Activated B cell treated with CpG ODN at 0.5 μM for 24 hours (primary cell): ENCODE measurements at regions of chr1 and their contacts with region 1.

Region 1: GRCh38 chr1:218345673-218346390 is 696 bp downstream of the TGFB2 start:
- DNase-seq: peak; percentile 50
- ATAC-seq: peak; percentile 76
- H3K4me3 Mint-ChIP-seq: no peak overlapping the region
- H3K27ac Mint-ChIP-seq: no peak overlapping the region
- H3K4me1 Mint-ChIP-seq: peaks cover 46% of the 10 kb centered on the region
- H3K27me3 Mint-ChIP-seq: no peaks in the 10 kb centered on the region
- CTCF ChIP-seq: no peak

Region 2: GRCh38 chr1:217630711-217631591 is 714.9 kb before region 1 on chr1 and contains the starts of genes GPATCH2 and SPATA17:
- CTCF ChIA-PET with region 1: no interaction called
- POLR2A ChIA-PET with region 1: no interaction called
- intact Hi-C with region 1: loop called (anchors 5 kb)
- DNase-seq: peak; percentile 59
- ATAC-seq: peak; percentile 89
- H3K4me3 Mint-ChIP-seq: peak within 1 kb of the TSS; percentile 97
- H3K27ac Mint-ChIP-seq: peak within 1 kb of the TSS; percentile 100
- H3K4me1 Mint-ChIP-seq: peaks cover 28% of the 10 kb centered on the region
- H3K27me3 Mint-ChIP-seq: peaks cover 15% of the 10 kb centered on the region
- CTCF ChIP-seq: no peak
- total RNA-seq, gene GPATCH2: 13.5 and 17.5 TPM in 2 replicates
- total RNA-seq, gene SPATA17: not detected in 2 replicates

Region 3: GRCh38 chr1:218315638-218316037 is 30.2 kb before region 1 on chr1:
- CTCF ChIA-PET with region 1: no interaction called
- POLR2A ChIA-PET with region 1: no interaction called
- intact Hi-C with region 1: loop called (anchors 1 kb)
- DNase-seq: no peak
- ATAC-seq: no peak
- H3K4me3 Mint-ChIP-seq: no peak overlapping the region
- H3K27ac Mint-ChIP-seq: no peak overlapping the region
- H3K4me1 Mint-ChIP-seq: no peaks in the 10 kb centered on the region
- H3K27me3 Mint-ChIP-seq: no peaks in the 10 kb centered on the region
- CTCF ChIP-seq: no peak

Region 4: GRCh38 chr1:218510153-218510772 is 164.4 kb after region 1 on chr1:
- CTCF ChIA-PET with region 1: no interaction called
- POLR2A ChIA-PET with region 1: no interaction called
- intact Hi-C with region 1: loop called (anchors 5 kb)
- DNase-seq: no peak
- ATAC-seq: no peak
- H3K4me3 Mint-ChIP-seq: no peak overlapping the region
- H3K27ac Mint-ChIP-seq: no peak overlapping the region
- H3K4me1 Mint-ChIP-seq: peaks cover 17% of the 10 kb centered on the region
- H3K27me3 Mint-ChIP-seq: no peaks in the 10 kb centered on the region
- CTCF ChIP-seq: no peak

Region 5: DNA sequence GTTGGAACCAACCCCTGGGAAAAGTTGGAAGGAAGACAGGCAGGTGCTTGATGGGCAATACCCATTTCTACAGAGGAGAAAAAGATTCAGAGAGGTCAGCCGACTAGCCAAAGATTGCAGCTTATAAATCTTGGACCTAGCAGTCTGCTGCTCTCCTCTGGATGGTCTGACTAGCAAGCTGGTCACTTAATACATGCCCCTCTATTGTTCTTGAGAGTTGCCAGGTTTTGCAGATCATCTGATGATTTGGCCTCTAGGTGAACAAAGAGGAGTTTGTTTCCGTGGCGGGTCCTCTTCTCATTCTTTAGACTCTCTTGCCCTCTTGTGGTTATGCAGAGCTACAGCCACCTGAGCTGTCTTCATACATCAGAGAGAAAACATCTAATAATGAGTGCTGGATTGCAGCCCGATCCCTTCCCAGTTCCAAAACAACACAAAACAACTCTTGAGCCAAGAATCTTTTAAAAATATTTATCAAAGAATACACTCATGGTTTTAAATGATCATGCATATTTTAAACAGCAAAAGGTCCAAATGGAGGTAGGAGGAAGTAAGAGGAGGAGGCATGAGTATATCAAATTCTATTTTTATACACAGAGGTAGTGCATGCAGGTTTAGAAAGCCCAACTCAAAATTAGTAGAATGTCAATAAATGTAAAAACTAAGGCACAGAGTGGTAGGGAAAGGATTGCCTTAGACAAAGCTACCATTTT is 1466.8 kb after region 1 on chr1:
- CTCF ChIA-PET with region 1: interaction called, 3 read pairs
- POLR2A ChIA-PET with region 1: no interaction called
- intact Hi-C with region 1: loop called (anchors 5 kb)
- DNase-seq: no peak
- ATAC-seq: peak; percentile 45
- H3K4me3 Mint-ChIP-seq: no peak overlapping the region
- H3K27ac Mint-ChIP-seq: no peak overlapping the region
- H3K4me1 Mint-ChIP-seq: no peaks in the 10 kb centered on the region
- H3K27me3 Mint-ChIP-seq: peaks cover 10% of the 10 kb centered on the region
- CTCF ChIP-seq: no peak